Activated CD8-positive, alpha-beta memory T cell treated with anti-CD3 and anti-CD28 coated beads, Interleukin-2, amount 10 ng/mL, durations not matched to agents 7 days and 5 days (primary cell): ENCODE measurements at regions of chr2 and their contacts with region 1.

Region 1: GRCh38 chr2:10448208-10448645 is at the start of gene ODC1:
- DNase-seq: peak; percentile 96
- ATAC-seq: peak; percentile 83
- H3K4me3 Mint-ChIP-seq: peak within 1 kb of the TSS; percentile 82
- H3K27ac Mint-ChIP-seq: peak within 1 kb of the TSS; percentile 86
- H3K4me1 Mint-ChIP-seq: peaks cover 42% of the 10 kb centered on the region
- H3K27me3 Mint-ChIP-seq: no peaks in the 10 kb centered on the region
- total RNA-seq, gene ODC1: 64.8 to 80.3 TPM

Region 2: GRCh38 chr2:10659898-10660568 is 211.8 kb after region 1 on chr2:
- CTCF ChIA-PET with region 1: interaction called, 20 read pairs
- DNase-seq: peak; percentile 72
- ATAC-seq: peak; percentile 83
- H3K4me3 Mint-ChIP-seq: no peak overlapping the region
- H3K27ac Mint-ChIP-seq: no peak overlapping the region
- H3K4me1 Mint-ChIP-seq: peaks cover 20% of the 10 kb centered on the region
- H3K27me3 Mint-ChIP-seq: no peaks in the 10 kb centered on the region